OCI-LY7 (cell line): ENCODE measurements at regions of chr2 and their contacts with region 1.

Region 1: GRCh38 chr2:68196120-68196716 is 38.5 kb downstream of the PNO1 start:
- DNase-seq: peak; percentile 66
- H3K4me3 ChIP-seq: no peak overlapping the region
- H3K27ac ChIP-seq: no peak overlapping the region
- H3K4me1 ChIP-seq: peaks cover 30% of the 10 kb centered on the region
- CTCF ChIP-seq: peak; percentile 89

Region 2: DNA sequence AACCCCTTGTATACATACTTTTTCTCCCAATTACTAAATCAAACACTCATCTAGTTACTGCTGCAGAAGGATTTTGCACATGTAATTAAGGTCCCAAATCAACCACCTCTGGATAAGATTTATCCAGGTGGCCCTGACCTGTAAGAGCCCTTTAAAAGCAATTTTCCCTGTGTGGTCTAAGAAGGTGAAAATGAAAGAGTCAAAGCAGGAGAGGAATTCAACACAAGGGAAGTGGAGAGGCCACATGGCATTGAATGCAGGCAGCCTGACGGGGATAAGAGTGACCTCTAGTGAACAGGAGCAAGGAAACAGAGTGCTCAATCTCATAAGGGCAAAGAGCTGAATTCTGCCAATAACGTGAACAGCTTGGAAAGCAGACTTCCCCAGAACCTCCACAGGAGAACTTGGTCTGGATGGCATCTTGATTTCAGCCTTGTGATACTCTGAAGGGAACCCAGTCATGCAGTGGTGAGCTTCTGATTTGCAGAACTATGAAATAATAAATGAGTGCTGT is 29.0 kb after region 1 on chr2:
- CTCF ChIA-PET with region 1: interaction called, 3 read pairs
- POLR2A ChIA-PET with region 1: interaction called, 3 read pairs
- intact Hi-C with region 1: loop called (anchors 1 kb)
- DNase-seq: peak; percentile 53
- H3K4me3 ChIP-seq: no peak overlapping the region
- H3K27ac ChIP-seq: peak overlapping the region; percentile 5
- H3K4me1 ChIP-seq: peaks cover 31% of the 10 kb centered on the region
- CTCF ChIP-seq: peak; percentile 77

Region 3: GRCh38 chr2:68282811-68283418 is 86.7 kb after region 1 on chr2:
- CTCF ChIA-PET with region 1: no interaction called
- POLR2A ChIA-PET with region 1: interaction called, 5 read pairs
- intact Hi-C with region 1: loop called (anchors 5 kb)
- DNase-seq: peak; percentile 74
- H3K4me3 ChIP-seq: no peak overlapping the region
- H3K27ac ChIP-seq: no peak overlapping the region
- H3K4me1 ChIP-seq: peaks cover 7% of the 10 kb centered on the region
- CTCF ChIP-seq: peak; percentile 96